ENCODE measurements at regions of chr2 and their contacts with region 1.

Region 1: GRCh38 chr2:237744613-237745249 is 53.8 kb upstream of the RBM44 start:
- ATAC-seq: peak; percentile 82 to 98 (median 94)
- H3K4me3 ChIP-seq: no peak overlapping the region
- H3K27ac ChIP-seq: no peak overlapping the region
- H3K4me1 ChIP-seq: no peaks in the 10 kb centered on the region

Region 2: GRCh38 chr2:237421542-237422116 is 323.1 kb before region 1 on chr2:
- in situ Hi-C with region 1: no loop called
- ATAC-seq: peak in 4 of 8 experiments; percentile 48 to 99 (median 98)
- H3K4me3 ChIP-seq: no peak overlapping the region
- H3K27ac ChIP-seq: no peak overlapping the region
- H3K4me1 ChIP-seq: no peaks in the 10 kb centered on the region

Region 3: GRCh38 chr2:237512774-237513466 is 231.8 kb before region 1 on chr2:
- in situ Hi-C with region 1: loop called in 1 of 9 experiments (anchors 25 kb)
- ATAC-seq: peak; percentile 85 to 98 (median 88)
- H3K4me3 ChIP-seq: no peak overlapping the region
- H3K27ac ChIP-seq: no peak overlapping the region
- H3K4me1 ChIP-seq: peaks cover 0 to 15% of the 10 kb centered on the region in 2 donors

Region 4: GRCh38 chr2:237581751-237582746 is 162.7 kb before region 1 on chr2:
- in situ Hi-C with region 1: loop called in 5 of 9 experiments (anchors 10 to 25 kb)
- ATAC-seq: peak; percentile 83 to 94 (median 87)
- H3K4me3 ChIP-seq: no peak overlapping the region
- H3K27ac ChIP-seq: peak overlapping the region in 1 of 2 donors; percentile 61
- H3K4me1 ChIP-seq: peaks cover 3 to 12% of the 10 kb centered on the region in 2 donors

Region 5: DNA sequence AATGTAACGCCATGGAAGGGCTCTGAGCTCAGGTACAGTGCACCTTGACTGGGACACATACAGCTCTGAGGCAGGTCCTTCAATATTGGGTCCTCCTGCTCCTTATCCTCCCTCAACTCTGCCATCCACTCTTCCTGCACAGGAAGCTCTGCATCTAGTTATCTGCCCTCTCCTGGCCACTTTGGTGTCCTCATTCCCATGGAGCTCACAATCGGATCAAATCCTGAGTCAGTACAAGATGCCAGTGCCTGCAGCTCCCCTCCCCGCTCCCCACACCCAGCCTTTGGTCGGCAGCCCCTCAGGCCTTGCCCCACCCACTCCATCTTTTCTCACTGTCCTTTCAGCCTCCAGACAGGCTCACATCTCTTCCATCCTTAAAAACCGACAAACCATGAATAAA is 59.3 kb before region 1 on chr2:
- in situ Hi-C with region 1: loop called in 1 of 9 experiments (anchors 10 kb)
- ATAC-seq: peak in 2 of 8 experiments; percentile 19 to 45
- H3K4me3 ChIP-seq: no peak overlapping the region
- H3K27ac ChIP-seq: no peak overlapping the region
- H3K4me1 ChIP-seq: no peaks in the 10 kb centered on the region

Measured in motor neuron (in vitro differentiated cells).